ENCODE measurements at regions of chr16 and their contacts with region 1.

Region 1: GRCh38 chr16:84952335-84953189 is 58.8 kb downstream of the ZDHHC7 start:
- DNase-seq: peak; percentile 85
- CTCF ChIP-seq: peak; percentile 73

Region 2: GRCh38 chr16:84504420-84505248 is 447.9 kb before region 1 on chr16 and contains the start of gene MEAK7:
- in situ Hi-C with region 1: loop called (anchors 25 kb)
- DNase-seq: peak; percentile 99
- CTCF ChIP-seq: no peak

Region 3: GRCh38 chr16:84647828-84648594 is 304.6 kb before region 1 on chr16 and contains the start of gene KLHL36:
- in situ Hi-C with region 1: loop called (anchors 25 kb)
- DNase-seq: peak; percentile 97
- CTCF ChIP-seq: no peak

Region 4: GRCh38 chr16:84759061-84759460 is 193.5 kb before region 1 on chr16:
- in situ Hi-C with region 1: no loop called
- DNase-seq: no peak
- CTCF ChIP-seq: no peak